OCI-LY7 (cell line): ENCODE measurements at regions of chr1 and their contacts with region 1.

Region 1: GRCh38 chr1:3727042-3727824 is 25.0 kb upstream of the CCDC27 start:
- DNase-seq: peak; percentile 40
- H3K4me3 ChIP-seq: no peak overlapping the region
- H3K27ac ChIP-seq: no peak overlapping the region
- H3K4me1 ChIP-seq: no peaks in the 10 kb centered on the region
- CTCF ChIP-seq: peak; percentile 68

Region 2: DNA sequence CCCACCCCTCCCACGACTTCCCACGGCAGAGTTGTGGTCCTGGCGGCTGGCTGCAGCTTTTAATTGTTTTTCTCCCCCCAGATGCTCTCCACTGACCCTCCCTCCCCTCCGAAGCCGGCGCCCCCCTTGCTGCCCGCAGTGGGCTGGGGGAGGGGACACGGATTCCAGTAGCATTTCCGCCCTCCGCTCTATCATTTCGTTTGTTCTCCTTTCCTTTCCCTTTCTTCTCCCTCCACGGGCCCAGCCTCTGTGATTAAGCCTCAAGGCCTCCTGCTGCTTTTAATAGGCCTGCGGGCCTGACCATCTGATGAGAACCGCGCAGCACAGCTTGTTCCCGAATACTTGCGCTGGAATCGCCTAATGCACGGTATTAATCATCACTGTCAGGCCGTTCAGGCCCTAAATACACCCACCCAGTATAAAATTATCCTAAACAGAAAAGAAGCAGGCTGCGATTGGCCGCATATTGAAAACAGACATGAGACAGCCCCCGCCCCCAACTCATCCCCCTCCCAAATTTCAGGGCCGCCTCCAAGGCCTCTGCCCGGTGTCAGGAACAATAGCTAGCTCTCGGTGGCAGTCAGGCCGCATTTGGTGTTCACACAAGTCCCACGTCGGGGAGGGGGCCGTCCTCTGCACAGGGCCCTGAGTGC is 374.8 kb before region 1 on chr1:
- CTCF ChIA-PET with region 1: no interaction called
- POLR2A ChIA-PET with region 1: no interaction called
- intact Hi-C with region 1: no loop called
- DNase-seq: no peak
- H3K4me3 ChIP-seq: no peak overlapping the region
- H3K27ac ChIP-seq: no peak overlapping the region
- H3K4me1 ChIP-seq: no peaks in the 10 kb centered on the region
- CTCF ChIP-seq: no peak

Region 3: DNA sequence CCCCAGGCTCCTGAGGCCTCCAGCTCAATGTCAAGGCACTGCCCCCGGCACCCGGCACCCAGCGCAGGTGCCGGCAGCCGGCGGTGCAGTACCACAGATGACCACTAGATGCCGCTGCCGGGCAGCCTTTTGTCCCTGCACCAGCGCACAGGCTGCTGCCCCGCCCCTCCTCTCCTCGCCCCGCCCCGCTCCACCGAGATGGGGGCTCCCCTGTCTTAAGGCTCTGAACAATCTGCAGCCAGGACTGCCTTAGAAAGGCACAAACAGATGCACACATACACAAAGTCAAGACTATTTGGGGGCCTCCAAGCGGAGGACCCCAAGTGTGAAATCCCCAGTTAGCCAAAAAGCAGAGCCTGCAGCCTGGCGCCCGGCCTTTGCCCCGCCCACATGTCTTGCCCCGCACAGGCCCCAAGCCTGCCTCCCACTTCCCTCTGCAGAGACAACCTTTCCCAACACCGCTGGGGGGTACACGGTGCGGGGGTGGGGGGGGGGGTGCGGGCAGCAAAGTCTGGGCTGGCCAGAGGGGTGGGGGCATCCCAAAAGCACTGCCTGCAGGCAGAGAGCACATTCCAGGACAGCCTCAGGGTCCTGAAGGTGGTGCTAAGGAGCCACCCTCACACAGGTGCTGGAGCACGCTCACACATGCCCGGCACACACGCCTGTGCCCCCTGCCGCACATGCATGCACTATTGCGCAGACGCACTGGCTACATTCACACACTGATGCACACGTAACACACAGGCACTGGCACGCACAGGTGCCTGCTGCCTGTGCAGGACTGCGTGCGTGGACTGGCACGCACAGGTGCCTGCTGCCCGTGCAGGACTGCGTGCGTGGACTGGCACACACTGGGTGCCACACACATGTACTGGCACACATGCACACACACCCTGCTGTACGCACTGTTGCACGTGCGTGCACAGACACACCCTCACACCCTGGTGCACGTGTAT is 235.7 kb before region 1 on chr1:
- CTCF ChIA-PET with region 1: no interaction called
- POLR2A ChIA-PET with region 1: no interaction called
- intact Hi-C with region 1: loop called (anchors 2 kb)
- DNase-seq: peak; percentile 73
- H3K4me3 ChIP-seq: peak overlapping the region; percentile 15
- H3K27ac ChIP-seq: no peak overlapping the region
- H3K4me1 ChIP-seq: no peaks in the 10 kb centered on the region
- CTCF ChIP-seq: peak; percentile 88

Region 4: DNA sequence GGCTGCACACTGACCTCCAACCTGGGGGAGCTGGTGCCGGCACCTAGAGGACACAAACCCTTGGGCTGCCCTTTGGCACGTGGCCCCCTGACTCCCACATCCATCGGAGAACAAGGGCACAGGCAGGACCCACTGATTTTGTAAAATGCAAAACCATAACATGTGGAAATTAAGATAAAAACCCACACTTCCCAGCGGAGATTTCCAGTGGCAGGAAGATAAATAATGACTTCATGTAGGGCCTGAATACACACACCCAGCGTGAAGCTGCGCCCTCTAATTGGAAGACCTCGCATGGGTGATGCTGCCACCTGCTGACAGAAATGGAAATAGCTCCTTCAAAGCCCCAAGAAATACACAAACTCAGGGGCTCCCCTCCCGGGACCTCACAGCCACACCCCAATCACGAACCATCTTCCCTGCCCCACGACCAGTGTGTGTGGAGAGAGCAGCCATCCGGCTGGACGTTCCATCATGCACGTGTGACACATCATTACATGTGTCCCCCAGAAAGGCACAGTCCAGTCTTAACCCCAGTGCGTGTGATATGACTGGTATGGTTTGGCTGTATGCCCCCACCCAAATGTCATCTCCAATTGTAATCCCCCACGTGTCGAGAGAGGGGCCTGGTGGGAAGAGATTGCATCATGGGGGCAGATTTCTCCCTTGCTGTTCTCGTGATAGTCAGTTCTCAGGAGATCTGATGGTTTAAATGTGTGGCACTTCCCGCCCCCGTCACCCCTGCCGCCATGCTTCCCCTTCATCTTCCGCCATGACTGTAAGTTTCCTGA is 108.2 kb before region 1 on chr1:
- CTCF ChIA-PET with region 1: interaction called, 4 read pairs
- POLR2A ChIA-PET with region 1: no interaction called
- intact Hi-C with region 1: loop called (anchors 2 kb)
- DNase-seq: peak; percentile 77
- H3K4me3 ChIP-seq: no peak overlapping the region
- H3K27ac ChIP-seq: no peak overlapping the region
- H3K4me1 ChIP-seq: peaks cover 12% of the 10 kb centered on the region
- CTCF ChIP-seq: peak; percentile 90

Region 5: GRCh38 chr1:3695326-3696217 is 31.7 kb before region 1 on chr1:
- CTCF ChIA-PET with region 1: no interaction called
- POLR2A ChIA-PET with region 1: no interaction called
- intact Hi-C with region 1: loop called (anchors 2 kb)
- DNase-seq: peak; percentile 30
- H3K4me3 ChIP-seq: no peak overlapping the region
- H3K27ac ChIP-seq: no peak overlapping the region
- H3K4me1 ChIP-seq: no peaks in the 10 kb centered on the region
- CTCF ChIP-seq: peak; percentile 79